CD8-positive, alpha-beta T cell (primary cell): ENCODE measurements at regions of chr2 and their contacts with region 1.

Region 1: DNA sequence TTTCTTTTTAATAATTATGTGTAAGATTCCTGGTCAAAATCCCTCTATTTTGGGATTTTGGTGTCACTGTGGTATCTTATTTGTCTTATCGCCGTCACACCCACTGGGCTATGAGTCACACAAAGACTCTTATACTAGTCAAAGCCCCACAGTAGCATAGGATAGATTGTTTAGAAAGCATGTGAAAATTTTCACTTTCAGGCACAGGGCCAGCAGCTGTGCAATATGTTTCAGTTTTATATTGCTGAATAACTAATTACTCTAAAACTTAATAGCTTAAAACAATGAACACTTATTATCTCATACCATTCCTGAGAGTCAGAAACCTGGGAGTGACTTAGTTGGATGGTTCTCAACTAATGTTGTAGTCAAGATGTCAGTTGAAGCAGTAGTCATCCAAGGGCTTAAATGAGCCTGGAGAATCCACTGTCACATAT is 24.0 kb downstream of the CFAP210 start:
- DNase-seq: no peak
- ATAC-seq: no peak
- H3K4me3 ChIP-seq: no peak overlapping the region
- H3K4me3 Mint-ChIP-seq: no peak overlapping the region
- H3K27ac ChIP-seq: no peak overlapping the region
- H3K27ac Mint-ChIP-seq: no peak overlapping the region
- H3K4me1 ChIP-seq: no peaks in the 10 kb centered on the region
- H3K4me1 Mint-ChIP-seq: no peaks in the 10 kb centered on the region
- H3K27me3 ChIP-seq: no peaks in the 10 kb centered on the region
- H3K27me3 Mint-ChIP-seq: peaks cover 5% of the 10 kb centered on the region
- CTCF ChIP-seq: no peak

Region 2: GRCh38 chr2:169694113-169694903 is 24.1 kb after region 1 on chr2 and contains the starts of genes CFAP210 and PHOSPHO2:
- CTCF ChIA-PET with region 1: no interaction called
- POLR2A ChIA-PET with region 1: no interaction called
- intact Hi-C with region 1: no loop called
- DNase-seq: peak; percentile 98 to 100 (median 99)
- ATAC-seq: peak; percentile 89
- H3K4me3 ChIP-seq: peak within 1 kb of the TSS; percentile 49 to 69
- H3K4me3 Mint-ChIP-seq: peak within 1 kb of the TSS; percentile 95
- H3K27ac ChIP-seq: peak within 1 kb of the TSS; percentile 86 to 93
- H3K27ac Mint-ChIP-seq: peak within 1 kb of the TSS; percentile 99
- H3K4me1 ChIP-seq: peaks cover 11% of the 10 kb centered on the region
- H3K4me1 Mint-ChIP-seq: peaks cover 19% of the 10 kb centered on the region
- H3K27me3 ChIP-seq: no peaks in the 10 kb centered on the region
- H3K27me3 Mint-ChIP-seq: peaks cover 2% of the 10 kb centered on the region
- CTCF ChIP-seq: no peak
- total RNA-seq, gene CFAP210: 0.95 to 1.4 TPM
- total RNA-seq, gene PHOSPHO2: 2.3 TPM

Region 3: GRCh38 chr2:169734169-169734847 is 64.1 kb after region 1 on chr2:
- CTCF ChIA-PET with region 1: no interaction called
- POLR2A ChIA-PET with region 1: no interaction called
- intact Hi-C with region 1: loop called in 1 of 2 experiments (anchors 2 kb)
- DNase-seq: peak in 2 of 9 experiments; percentile 25
- ATAC-seq: peak; percentile 23
- H3K4me3 ChIP-seq: peak overlapping the region; percentile 36 to 37
- H3K4me3 Mint-ChIP-seq: peak overlapping the region; percentile 76
- H3K27ac ChIP-seq: no peak overlapping the region
- H3K27ac Mint-ChIP-seq: no peak overlapping the region
- H3K4me1 ChIP-seq: peaks cover 13% of the 10 kb centered on the region
- H3K4me1 Mint-ChIP-seq: peaks cover 19% of the 10 kb centered on the region
- H3K27me3 ChIP-seq: peaks cover 0 to 5% of the 10 kb centered on the region in 2 experiments
- H3K27me3 Mint-ChIP-seq: peaks cover 17% of the 10 kb centered on the region
- CTCF ChIP-seq: no peak